CD4-positive, alpha-beta memory T cell (primary cell): ENCODE measurements at regions of chr22 and their contacts with region 1.

Region 1: GRCh38 chr22:20495861-20496681 is 476 bp upstream of the KLHL22 start:
- DNase-seq: peak; percentile 89 to 92 (median 91)
- H3K4me3 ChIP-seq: peak overlapping the region; percentile 53 to 85
- H3K4me3 Mint-ChIP-seq: peak overlapping the region; percentile 90 to 96 (median 93)
- H3K27ac ChIP-seq: peak overlapping the region; percentile 91
- H3K27ac Mint-ChIP-seq: peak overlapping the region; percentile 83 to 98 (median 95)
- H3K4me1 ChIP-seq: peaks cover 42% of the 10 kb centered on the region
- H3K4me1 Mint-ChIP-seq: peaks cover 21 to 56% (median 40%) of the 10 kb centered on the region in 4 donors
- H3K27me3 ChIP-seq: no peaks in the 10 kb centered on the region
- H3K27me3 Mint-ChIP-seq: no peaks in the 10 kb centered on the region

Region 2: DNA sequence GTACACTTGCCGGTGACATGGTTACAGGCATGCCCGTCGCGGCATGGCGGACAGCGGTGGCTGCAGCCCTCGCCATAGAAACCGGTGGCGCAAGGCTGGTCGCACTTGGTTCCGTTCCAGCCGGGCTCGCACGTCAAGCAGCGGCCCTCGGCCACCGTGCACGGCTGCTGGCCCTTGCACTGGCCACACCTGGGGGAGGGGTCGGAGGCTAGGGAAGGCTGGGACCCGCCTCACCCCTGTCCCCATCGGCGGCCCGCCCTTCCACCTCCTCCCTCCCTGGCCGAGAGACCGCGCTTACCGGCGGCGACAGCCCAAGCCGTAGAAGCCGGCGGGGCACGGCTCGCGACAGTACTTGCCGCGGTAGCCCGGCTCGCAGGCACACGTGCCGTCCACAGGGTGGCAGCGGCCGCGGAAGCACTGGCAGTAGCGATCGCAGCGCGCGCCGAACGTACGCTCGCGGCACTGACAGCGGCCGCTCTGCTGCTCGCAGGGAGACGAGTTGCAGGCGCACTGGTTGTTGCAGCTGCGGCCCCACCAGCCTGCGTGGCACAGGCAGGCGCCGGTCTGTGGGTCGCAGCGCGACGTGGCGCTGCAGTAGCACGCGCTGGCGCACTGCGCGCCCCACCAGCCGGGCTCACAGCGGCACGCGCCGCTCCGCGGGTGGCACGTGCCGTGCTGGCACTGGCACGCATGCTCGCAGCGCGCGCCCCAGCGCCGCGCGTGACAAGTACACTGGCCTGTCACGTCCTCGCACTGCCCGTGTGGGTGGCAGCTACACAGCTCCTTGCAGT is 65.2 kb before region 1 on chr22:
- CTCF ChIA-PET with region 1: interaction called, 3 read pairs
- POLR2A ChIA-PET with region 1: interaction called, 7 read pairs
- intact Hi-C with region 1: loop called (anchors 1 kb)
- DNase-seq: peak; percentile 61 to 72 (median 68)
- H3K4me3 ChIP-seq: peak overlapping the region in 1 of 2 donors; percentile 65
- H3K4me3 Mint-ChIP-seq: peak overlapping the region; percentile 67 to 91 (median 88)
- H3K27ac ChIP-seq: no peak overlapping the region
- H3K27ac Mint-ChIP-seq: no peak overlapping the region
- H3K4me1 ChIP-seq: peaks cover 37% of the 10 kb centered on the region
- H3K4me1 Mint-ChIP-seq: peaks cover 10 to 49% (median 18%) of the 10 kb centered on the region in 4 donors
- H3K27me3 ChIP-seq: peaks cover 19% of the 10 kb centered on the region
- H3K27me3 Mint-ChIP-seq: peaks cover 20% of the 10 kb centered on the region in 2 donors

Region 3: GRCh38 chr22:20456064-20456721 is 39.9 kb before region 1 on chr22:
- CTCF ChIA-PET with region 1: interaction called, 10 read pairs
- POLR2A ChIA-PET with region 1: no interaction called
- intact Hi-C with region 1: loop called (anchors 2 kb)
- DNase-seq: peak; percentile 72 to 79 (median 74)
- H3K4me3 ChIP-seq: no peak overlapping the region
- H3K4me3 Mint-ChIP-seq: peak overlapping the region in 3 of 8 donors; percentile 9 to 20 (median 15)
- H3K27ac ChIP-seq: no peak overlapping the region
- H3K27ac Mint-ChIP-seq: peak overlapping the region in 6 of 7 donors; percentile 2 to 75 (median 54)
- H3K4me1 ChIP-seq: peaks cover 25% of the 10 kb centered on the region
- H3K4me1 Mint-ChIP-seq: peaks cover 18 to 49% (median 25%) of the 10 kb centered on the region in 4 donors
- H3K27me3 ChIP-seq: no peaks in the 10 kb centered on the region
- H3K27me3 Mint-ChIP-seq: no peaks in the 10 kb centered on the region

Region 4: DNA sequence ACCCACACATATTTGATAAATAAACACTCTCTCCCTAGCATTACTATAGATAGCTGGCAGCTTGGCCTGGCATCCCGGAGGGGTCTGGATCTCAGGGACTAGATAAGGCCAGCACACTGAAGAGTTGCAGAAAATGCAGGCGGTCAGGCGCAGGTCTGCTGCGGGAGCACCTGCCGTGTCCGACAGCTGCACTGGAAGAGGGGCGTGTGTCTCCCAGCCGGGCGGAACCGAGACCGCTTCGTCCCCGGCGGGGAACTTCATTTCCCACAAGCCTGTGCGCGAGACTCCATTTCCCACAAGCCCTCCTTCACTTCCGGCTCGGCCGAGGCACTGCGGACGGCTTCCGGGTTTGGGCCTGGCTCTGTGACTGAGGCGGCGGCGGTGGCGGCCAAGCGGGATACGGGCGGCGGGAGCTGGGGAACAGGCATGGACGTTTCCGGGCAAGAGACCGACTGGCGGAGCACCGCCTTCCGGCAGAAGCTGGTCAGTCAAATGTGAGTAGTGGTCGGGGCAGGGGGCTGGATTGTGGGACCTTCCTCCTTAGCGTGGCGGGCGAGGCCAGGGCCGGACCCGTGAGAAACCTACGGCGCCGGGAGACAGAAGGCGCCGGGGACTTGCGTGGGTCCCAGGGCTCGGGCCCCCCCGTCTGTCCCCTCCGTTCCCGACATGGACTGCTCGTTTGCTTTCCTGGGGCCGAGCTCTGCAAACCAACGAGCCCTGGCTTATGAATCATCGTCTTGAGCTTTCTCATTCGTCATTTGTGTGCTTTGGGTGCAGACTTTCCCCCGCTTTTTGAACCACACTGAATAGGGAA is 11.4 kb after region 1 on chr22 and contains the start of gene MED15:
- CTCF ChIA-PET with region 1: interaction called, 3 read pairs
- POLR2A ChIA-PET with region 1: interaction called, 6 read pairs
- intact Hi-C with region 1: loop called (anchors 1 kb)
- DNase-seq: peak; percentile 82 to 90 (median 84)
- H3K4me3 ChIP-seq: peak within 1 kb of the TSS; percentile 85 to 98
- H3K4me3 Mint-ChIP-seq: peak within 1 kb of the TSS; percentile 93 to 99 (median 97)
- H3K27ac ChIP-seq: peak within 1 kb of the TSS; percentile 93
- H3K27ac Mint-ChIP-seq: peak within 1 kb of the TSS; percentile 86 to 99 (median 96)
- H3K4me1 ChIP-seq: peaks cover 50% of the 10 kb centered on the region
- H3K4me1 Mint-ChIP-seq: peaks cover 42 to 57% (median 50%) of the 10 kb centered on the region in 4 donors
- H3K27me3 ChIP-seq: no peaks in the 10 kb centered on the region
- H3K27me3 Mint-ChIP-seq: no peaks in the 10 kb centered on the region
- total RNA-seq, gene MED15: 225 to 237 TPM

Region 5: DNA sequence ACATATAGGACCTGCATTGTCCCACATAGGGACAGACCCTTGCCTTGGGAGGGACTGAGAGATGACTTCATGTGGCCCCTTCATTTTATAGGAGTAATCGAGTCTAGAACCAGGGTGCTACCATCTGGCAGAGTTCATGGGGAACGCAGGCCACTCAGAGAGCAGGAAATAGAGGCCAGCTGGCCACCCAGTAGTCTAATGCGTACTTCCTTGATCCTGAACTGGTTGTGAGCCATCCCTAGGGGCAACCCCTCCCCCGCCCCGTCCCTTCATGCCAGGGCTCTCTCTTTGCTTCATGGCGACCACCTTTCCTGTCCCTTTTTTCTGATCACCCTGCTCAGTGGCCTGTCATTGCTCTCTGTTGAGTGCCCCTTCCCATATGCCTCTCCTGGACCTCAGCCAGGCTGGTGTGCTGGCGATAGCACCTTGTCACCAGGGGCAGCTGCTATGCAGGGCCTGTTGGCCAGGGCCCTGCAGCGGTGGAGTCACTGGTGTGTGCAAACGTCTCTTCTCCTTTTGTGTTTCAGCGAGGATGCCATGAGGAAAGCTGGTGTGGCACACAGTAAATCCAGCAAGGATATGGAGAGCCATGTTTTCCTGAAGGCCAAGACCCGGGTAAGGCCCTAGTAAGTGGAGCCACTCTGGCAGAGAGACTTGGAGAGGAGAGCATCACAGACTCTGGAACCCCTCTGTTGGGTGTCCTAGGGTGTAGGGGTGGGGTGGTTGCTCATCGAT is 40.7 kb after region 1 on chr22:
- CTCF ChIA-PET with region 1: no interaction called
- POLR2A ChIA-PET with region 1: no interaction called
- intact Hi-C with region 1: no loop called
- DNase-seq: no peak
- H3K4me3 ChIP-seq: no peak overlapping the region
- H3K4me3 Mint-ChIP-seq: peak overlapping the region in 1 of 8 donors; percentile 25
- H3K27ac ChIP-seq: no peak overlapping the region
- H3K27ac Mint-ChIP-seq: peak overlapping the region in 6 of 7 donors; percentile 29 to 79 (median 70)
- H3K4me1 ChIP-seq: peaks cover 30% of the 10 kb centered on the region
- H3K4me1 Mint-ChIP-seq: peaks cover 38 to 56% (median 41%) of the 10 kb centered on the region in 4 donors
- H3K27me3 ChIP-seq: no peaks in the 10 kb centered on the region
- H3K27me3 Mint-ChIP-seq: no peaks in the 10 kb centered on the region

Region 6: DNA sequence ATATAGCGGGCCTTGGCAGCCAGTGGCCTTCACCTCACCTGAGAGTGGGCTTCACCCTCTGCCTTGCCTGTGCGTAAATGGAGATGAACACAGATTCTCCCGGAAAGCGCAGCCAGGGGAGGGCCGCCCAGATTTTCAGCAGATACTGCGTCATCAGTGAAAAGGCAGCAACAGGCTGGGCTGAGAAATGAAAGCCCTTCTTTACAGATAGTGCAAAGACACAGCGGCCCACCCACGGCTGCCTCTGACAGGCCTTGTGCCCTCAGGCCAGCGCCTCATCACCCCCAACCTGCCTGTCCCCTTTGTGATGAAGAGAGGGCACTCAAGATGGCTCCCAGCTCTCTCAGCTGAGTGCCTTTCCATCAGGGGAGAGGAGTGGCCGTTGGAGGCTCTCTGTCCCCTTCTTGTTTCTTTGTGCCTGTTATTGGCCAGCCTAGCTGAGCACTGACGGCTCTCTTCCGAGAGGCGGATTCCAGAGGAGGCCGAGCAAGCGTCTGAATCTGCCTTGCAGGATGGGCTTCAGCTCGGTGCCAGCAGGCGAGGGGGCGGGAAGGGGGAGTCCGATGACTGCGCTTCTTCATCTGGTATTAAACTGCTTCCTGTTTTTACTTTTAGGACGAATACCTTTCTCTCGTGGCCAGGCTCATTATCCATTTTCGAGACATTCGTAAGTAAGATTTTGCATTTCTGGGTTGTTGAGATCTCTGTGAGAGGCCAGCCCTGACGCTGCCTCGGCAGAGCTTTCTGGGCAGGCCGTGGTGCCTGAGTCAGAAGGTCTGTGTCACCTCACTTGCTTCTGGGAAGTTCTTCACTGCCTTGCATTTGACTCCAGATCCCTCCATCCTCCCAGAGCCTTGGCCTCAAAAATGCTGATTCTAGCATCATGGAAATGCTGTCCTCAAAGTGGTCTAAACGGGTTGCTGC is 55.0 kb after region 1 on chr22:
- CTCF ChIA-PET with region 1: interaction called, 3 read pairs
- POLR2A ChIA-PET with region 1: interaction called, 10 read pairs
- intact Hi-C with region 1: no loop called
- DNase-seq: peak; percentile 45 to 73 (median 57)
- H3K4me3 ChIP-seq: peak overlapping the region; percentile 7 to 15
- H3K4me3 Mint-ChIP-seq: peak overlapping the region; percentile 84 to 89 (median 88)
- H3K27ac ChIP-seq: peak overlapping the region; percentile 75
- H3K27ac Mint-ChIP-seq: peak overlapping the region; percentile 92 to 99 (median 98)
- H3K4me1 ChIP-seq: peaks cover 91% of the 10 kb centered on the region
- H3K4me1 Mint-ChIP-seq: peaks cover 58 to 92% (median 76%) of the 10 kb centered on the region in 4 donors
- H3K27me3 ChIP-seq: no peaks in the 10 kb centered on the region
- H3K27me3 Mint-ChIP-seq: no peaks in the 10 kb centered on the region

Region 7: DNA sequence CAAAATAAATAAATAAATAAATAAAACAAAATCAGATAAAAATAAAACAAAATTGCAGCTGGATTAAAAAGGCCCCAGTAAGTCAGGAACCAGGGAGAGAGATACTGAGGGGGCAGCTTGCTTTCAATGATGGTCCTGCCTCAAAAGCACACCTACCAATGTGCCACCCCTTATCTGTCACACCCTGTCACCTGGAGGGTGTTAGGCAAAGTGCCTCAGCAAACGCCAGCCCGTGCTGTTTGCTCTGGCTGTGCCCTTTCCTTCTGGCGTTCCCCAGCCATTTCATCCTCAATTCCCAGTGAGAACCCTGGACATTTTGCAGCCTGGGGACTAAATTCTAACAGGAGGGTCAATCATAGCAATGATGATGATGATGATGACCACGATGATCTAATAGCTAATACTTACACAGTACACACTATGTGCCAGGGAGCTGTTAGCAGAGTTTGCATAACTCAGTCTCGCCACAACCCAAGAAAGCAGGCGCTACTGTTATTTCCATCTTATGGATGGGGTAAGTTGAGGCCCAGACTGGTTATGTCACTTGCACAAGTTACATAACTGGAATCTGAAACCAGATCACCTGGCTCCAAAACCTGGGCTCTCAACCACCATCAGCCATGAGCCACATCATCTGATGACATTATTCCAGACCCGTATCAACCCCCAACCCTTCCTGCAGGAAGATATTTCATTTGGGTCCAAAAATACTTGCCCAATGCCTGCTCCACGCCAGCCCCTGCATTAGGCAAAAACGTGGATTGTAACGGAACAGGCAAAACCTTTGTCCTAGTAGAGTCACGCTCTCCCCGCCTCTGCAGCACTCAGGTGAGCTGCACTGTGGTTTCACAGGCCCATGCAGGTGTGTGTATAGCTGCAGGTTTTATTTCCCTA is 145.2 kb after region 1 on chr22:
- CTCF ChIA-PET with region 1: no interaction called
- POLR2A ChIA-PET with region 1: no interaction called
- intact Hi-C with region 1: no loop called
- DNase-seq: no peak
- H3K4me3 ChIP-seq: no peak overlapping the region
- H3K4me3 Mint-ChIP-seq: no peak overlapping the region
- H3K27ac ChIP-seq: no peak overlapping the region
- H3K27ac Mint-ChIP-seq: no peak overlapping the region
- H3K4me1 ChIP-seq: no peaks in the 10 kb centered on the region
- H3K4me1 Mint-ChIP-seq: no peaks in the 10 kb centered on the region
- H3K27me3 ChIP-seq: no peaks in the 10 kb centered on the region
- H3K27me3 Mint-ChIP-seq: peaks cover 3 to 5% of the 10 kb centered on the region in 2 donors